ENCODE measurements at regions of chr10 and their contacts with region 1.

Region 1: DNA sequence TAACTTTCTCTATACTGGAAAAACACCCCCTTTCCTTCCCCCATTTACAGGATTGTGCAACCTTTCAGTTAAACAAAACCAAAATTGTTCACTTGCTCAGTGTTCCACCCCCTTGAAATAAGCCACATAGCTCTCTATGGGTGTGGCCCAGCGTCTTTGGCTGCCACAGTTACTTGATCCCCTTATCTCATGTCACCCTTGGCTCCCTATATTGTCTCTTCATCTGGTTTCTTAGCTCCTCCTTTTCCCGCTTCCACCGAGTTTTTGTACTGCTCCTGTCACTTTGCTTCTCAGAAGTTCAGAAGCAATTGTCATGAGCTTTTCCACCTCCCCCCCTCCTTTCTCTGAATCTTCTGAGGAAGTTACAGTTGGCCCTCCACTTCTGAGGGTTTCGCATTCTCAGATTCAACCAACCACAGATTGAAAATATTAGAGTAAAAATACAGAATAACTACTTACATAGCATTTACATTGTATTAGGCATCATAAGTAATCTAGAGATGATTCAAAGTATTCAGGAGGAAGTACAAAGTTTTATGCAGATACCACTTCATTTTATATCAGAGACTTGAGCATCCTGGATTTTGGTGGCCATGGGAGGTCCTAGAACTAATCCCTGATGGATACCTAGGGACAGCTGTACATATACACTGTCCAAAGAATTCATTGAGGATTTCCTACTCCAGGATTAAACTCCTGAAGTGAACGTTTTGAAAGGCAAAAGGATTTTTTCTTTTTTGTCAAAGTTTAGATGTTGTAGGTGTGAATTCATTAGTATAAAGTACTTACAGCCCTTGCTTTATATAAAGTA is 60.4 kb downstream of the ADD3 start:
- DNase-seq: peak; percentile 60
- H3K4me3 Mint-ChIP-seq: peak overlapping the region; percentile 80
- H3K27ac Mint-ChIP-seq: peak overlapping the region; percentile 96
- H3K4me1 Mint-ChIP-seq: peaks cover 93% of the 10 kb centered on the region
- H3K27me3 Mint-ChIP-seq: no peaks in the 10 kb centered on the region

Region 2: GRCh38 chr10:110081911-110082310 is 13.7 kb after region 1 on chr10:
- intact Hi-C with region 1: loop called (anchors 1 kb)
- DNase-seq: no peak
- H3K4me3 Mint-ChIP-seq: peak overlapping the region; percentile 37
- H3K27ac Mint-ChIP-seq: peak overlapping the region; percentile 71
- H3K4me1 Mint-ChIP-seq: peaks cover 87% of the 10 kb centered on the region
- H3K27me3 Mint-ChIP-seq: no peaks in the 10 kb centered on the region

Measured in activated T-helper 1 cell treated with anti-CD3 and anti-CD28 coated beads, Interleukin-12 subunit alpha, Interleukin-12 subunit beta, Interleukin-2, Interleukin-4 antibody, amounts not matched to agents 30 ng/mL and 10 ng/mL and 1 ng/mL, durations not matched to agents 14 hours and 24 hours and 36 hours (primary cell).